ENCODE measurements at regions of chr17 and their contacts with region 1.

Region 1: DNA sequence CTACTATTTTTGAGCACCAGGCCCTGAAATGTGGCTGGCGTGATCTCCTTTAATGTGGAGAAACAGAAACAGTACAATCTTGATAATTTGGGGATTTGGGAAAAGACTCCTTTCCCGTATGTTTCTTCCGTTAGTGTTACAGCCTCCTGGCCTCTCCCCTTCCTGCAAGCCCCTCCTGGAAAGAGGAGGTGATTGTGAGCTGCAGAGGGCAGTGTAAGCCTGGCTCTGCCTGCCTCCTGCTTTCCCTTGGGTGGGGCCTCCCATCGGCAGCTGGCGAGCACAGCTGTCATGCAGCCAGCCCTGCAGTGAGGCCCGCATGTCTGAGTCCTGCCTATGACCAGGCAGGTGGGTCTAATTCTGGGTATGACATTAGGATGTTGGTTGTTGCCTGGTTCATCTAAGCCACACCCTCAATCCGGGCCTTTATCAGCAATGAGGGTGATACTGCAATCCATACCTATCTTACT is 48.7 kb upstream of the WSB1 start:
- DNase-seq: peak; percentile 36
- ATAC-seq: peak; percentile 91
- H3K4me3 Mint-ChIP-seq: no peak overlapping the region
- H3K27ac Mint-ChIP-seq: no peak overlapping the region
- H3K4me1 Mint-ChIP-seq: peaks cover 28% of the 10 kb centered on the region
- H3K27me3 Mint-ChIP-seq: no peaks in the 10 kb centered on the region
- CTCF ChIP-seq: peak; percentile 27

Region 2: GRCh38 chr17:27009087-27009486 is 236.2 kb before region 1 on chr17:
- CTCF ChIA-PET with region 1: no interaction called
- POLR2A ChIA-PET with region 1: no interaction called
- intact Hi-C with region 1: no loop called
- DNase-seq: no peak
- ATAC-seq: no peak
- H3K4me3 Mint-ChIP-seq: no peak overlapping the region
- H3K27ac Mint-ChIP-seq: no peak overlapping the region
- H3K4me1 Mint-ChIP-seq: no peaks in the 10 kb centered on the region
- H3K27me3 Mint-ChIP-seq: no peaks in the 10 kb centered on the region
- CTCF ChIP-seq: no peak

Region 3: GRCh38 chr17:27199948-27200347 is 45.3 kb before region 1 on chr17:
- CTCF ChIA-PET with region 1: interaction called, 37 read pairs
- POLR2A ChIA-PET with region 1: no interaction called
- intact Hi-C with region 1: loop called (anchors 2 kb)
- DNase-seq: no peak
- ATAC-seq: no peak
- H3K4me3 Mint-ChIP-seq: no peak overlapping the region
- H3K27ac Mint-ChIP-seq: no peak overlapping the region
- H3K4me1 Mint-ChIP-seq: no peaks in the 10 kb centered on the region
- H3K27me3 Mint-ChIP-seq: no peaks in the 10 kb centered on the region
- CTCF ChIP-seq: no peak

Region 4: GRCh38 chr17:27282054-27282551 is 36.8 kb after region 1 on chr17:
- CTCF ChIA-PET with region 1: no interaction called
- POLR2A ChIA-PET with region 1: interaction called, 12 read pairs
- intact Hi-C with region 1: no loop called
- DNase-seq: no peak
- ATAC-seq: peak; percentile 87
- H3K4me3 Mint-ChIP-seq: peak overlapping the region; percentile 33
- H3K27ac Mint-ChIP-seq: peak overlapping the region; percentile 88
- H3K4me1 Mint-ChIP-seq: peaks cover 58% of the 10 kb centered on the region
- H3K27me3 Mint-ChIP-seq: no peaks in the 10 kb centered on the region
- CTCF ChIP-seq: no peak

Region 5: DNA sequence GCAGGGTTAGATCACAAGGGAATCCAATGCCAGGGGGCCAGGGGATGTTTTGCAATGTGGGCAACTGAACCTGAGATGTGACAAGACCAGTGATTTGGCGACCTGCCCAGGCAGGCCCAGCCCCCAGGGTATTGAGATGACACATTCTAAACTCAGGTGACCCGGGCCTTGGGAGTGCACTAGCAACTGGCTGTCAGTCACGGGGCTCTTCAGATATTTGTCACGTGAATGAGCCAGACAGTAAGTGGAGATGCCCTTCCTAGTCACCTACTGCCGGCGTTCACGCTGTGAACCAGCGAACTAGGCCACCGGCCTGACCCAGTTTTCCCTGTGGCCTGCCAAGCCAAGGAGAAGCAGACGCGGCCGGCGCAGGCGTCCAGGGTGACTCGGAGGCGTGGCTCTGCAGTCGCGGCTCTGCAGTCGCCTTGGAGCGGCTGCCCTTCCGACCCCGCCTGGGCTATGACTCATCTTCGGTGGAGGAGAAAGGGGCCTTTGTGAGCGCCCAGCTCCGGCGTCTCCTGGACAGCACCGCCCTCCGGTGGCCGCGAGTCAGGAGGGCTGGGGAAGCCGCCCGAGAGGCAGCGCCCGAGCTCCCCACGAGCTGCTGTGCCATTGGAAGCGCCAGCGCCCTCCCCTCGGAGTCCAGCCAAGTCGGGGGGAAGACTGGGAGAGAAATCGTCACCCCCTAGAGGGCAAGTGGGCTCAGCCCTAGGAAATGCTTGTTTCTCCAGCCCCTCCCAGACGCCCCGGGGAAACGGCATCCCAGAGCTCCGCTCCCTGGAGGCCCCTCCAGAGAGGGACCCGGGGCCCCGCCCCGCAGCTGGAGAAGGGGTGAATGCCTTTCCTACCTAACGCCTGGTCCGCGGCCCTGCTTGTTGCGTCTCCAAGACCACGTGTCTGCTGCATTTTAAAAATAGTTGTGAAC is 87.5 kb after region 1 on chr17:
- CTCF ChIA-PET with region 1: interaction called, 48 read pairs
- POLR2A ChIA-PET with region 1: interaction called, 9 read pairs
- intact Hi-C with region 1: no loop called
- DNase-seq: peak; percentile 83
- ATAC-seq: peak; percentile 88
- H3K4me3 Mint-ChIP-seq: peak overlapping the region; percentile 86
- H3K27ac Mint-ChIP-seq: peak overlapping the region; percentile 87
- H3K4me1 Mint-ChIP-seq: peaks cover 36% of the 10 kb centered on the region
- H3K27me3 Mint-ChIP-seq: no peaks in the 10 kb centered on the region
- CTCF ChIP-seq: no peak

Region 6: DNA sequence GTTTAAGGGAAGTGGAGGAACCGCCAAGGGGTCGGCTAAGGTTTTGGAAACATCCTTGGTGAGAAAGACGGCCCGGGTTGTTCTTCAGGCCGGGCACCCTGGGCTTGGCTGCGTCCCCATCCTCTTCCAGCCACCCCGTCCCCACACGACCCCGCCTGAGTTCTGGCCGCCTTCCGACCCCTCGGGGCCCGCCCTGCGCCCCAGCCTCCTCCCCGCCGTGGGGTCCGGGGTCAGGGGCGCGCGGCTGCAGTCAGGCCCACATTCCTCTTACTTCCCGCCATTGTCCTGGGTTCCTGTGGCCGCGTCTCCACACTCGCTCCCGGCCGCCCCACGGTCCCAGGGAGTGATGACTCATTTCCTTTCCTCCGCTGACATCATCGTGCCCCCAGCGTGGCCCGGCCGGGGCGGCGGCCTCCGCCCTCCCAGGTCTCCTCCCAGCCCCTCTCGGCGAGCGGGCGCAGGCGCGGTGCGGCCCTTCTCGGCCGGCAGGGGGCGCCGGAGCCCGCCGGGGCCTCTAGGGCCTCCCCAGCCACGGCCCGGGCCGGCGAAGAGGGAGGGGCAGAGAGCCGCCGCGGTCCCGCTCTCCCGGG is 108.3 kb after region 1 on chr17:
- CTCF ChIA-PET with region 1: interaction called, 4 read pairs
- POLR2A ChIA-PET with region 1: no interaction called
- intact Hi-C with region 1: loop called (anchors 2 kb)
- DNase-seq: peak; percentile 90
- ATAC-seq: peak; percentile 87
- H3K4me3 Mint-ChIP-seq: peak overlapping the region; percentile 89
- H3K27ac Mint-ChIP-seq: peak overlapping the region; percentile 83
- H3K4me1 Mint-ChIP-seq: peaks cover 22% of the 10 kb centered on the region
- H3K27me3 Mint-ChIP-seq: no peaks in the 10 kb centered on the region
- CTCF ChIP-seq: peak; percentile 50

Region 7: DNA sequence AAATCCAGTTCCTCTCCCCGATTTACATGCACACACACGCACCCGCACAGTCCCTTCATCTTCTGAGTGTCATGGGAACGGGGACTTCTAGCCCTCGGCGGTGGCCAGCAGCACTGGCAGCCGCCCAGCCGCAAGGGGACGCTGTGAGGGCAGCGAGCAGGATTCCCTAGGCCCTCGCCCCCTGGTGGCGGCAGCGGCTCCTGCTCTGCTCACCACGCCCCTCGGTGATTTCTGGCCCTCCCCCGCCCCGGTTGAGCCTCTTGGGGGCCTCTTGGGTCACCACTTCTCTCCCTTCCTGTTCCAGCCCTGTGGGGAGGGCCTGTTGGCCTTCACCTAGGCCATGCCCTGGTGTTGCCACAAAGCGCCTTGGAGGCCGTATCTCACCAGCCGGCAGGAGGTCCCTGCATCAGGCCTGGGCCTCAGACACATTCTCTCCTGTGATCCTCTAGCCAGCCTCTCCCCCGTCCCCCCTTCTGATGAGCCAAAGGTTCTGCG is 135.8 kb after region 1 on chr17:
- CTCF ChIA-PET with region 1: interaction called, 8 read pairs
- POLR2A ChIA-PET with region 1: no interaction called
- intact Hi-C with region 1: loop called (anchors 1 kb)
- DNase-seq: peak; percentile 70
- ATAC-seq: peak; percentile 94
- H3K4me3 Mint-ChIP-seq: no peak overlapping the region
- H3K27ac Mint-ChIP-seq: no peak overlapping the region
- H3K4me1 Mint-ChIP-seq: peaks cover 6% of the 10 kb centered on the region
- H3K27me3 Mint-ChIP-seq: peaks cover 18% of the 10 kb centered on the region
- CTCF ChIP-seq: peak; percentile 35

Region 8: DNA sequence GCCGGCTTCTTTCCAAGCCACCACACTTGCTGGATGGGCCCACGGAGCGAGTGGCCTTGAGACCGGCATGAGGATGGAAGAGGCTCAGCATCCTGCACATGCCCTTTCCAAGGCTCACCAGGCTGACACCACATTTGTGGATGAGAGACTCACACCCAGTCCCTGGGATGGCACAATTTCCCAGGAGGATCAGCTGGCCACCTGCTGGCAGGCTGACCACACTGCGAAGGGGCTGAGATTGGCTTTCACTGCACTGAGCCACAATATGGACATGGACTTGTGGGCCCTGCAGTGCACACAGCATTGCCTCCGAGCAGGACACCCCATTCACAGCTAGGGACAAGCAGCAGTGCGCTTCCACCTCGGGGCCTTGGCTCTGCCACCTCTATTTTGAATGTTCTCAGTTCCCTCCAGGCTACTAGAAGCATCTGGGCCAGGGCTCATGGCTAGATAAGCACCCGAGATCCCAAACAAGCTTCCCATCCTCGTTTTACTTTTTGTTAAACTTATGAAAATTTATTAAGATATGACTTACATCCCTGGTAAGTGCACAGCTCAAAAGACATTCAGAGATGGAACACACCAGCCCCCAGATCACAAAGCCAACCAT is 185.7 kb after region 1 on chr17:
- CTCF ChIA-PET with region 1: no interaction called
- POLR2A ChIA-PET with region 1: no interaction called
- intact Hi-C with region 1: no loop called
- DNase-seq: no peak
- ATAC-seq: no peak
- H3K4me3 Mint-ChIP-seq: no peak overlapping the region
- H3K27ac Mint-ChIP-seq: no peak overlapping the region
- H3K4me1 Mint-ChIP-seq: no peaks in the 10 kb centered on the region
- H3K27me3 Mint-ChIP-seq: no peaks in the 10 kb centered on the region
- CTCF ChIP-seq: no peak

Region 9: GRCh38 chr17:27810902-27811557 is 565.8 kb after region 1 on chr17:
- CTCF ChIA-PET with region 1: no interaction called
- POLR2A ChIA-PET with region 1: no interaction called
- intact Hi-C with region 1: no loop called
- DNase-seq: no peak
- ATAC-seq: no peak
- H3K4me3 Mint-ChIP-seq: no peak overlapping the region
- H3K27ac Mint-ChIP-seq: no peak overlapping the region
- H3K4me1 Mint-ChIP-seq: peaks cover 38% of the 10 kb centered on the region
- H3K27me3 Mint-ChIP-seq: peaks cover 5% of the 10 kb centered on the region
- CTCF ChIP-seq: no peak

Measured in activated B cell treated with CpG ODN at 0.5 μM for 24 hours (primary cell).